Right ventricle myocardium superior (tissue), 1 donor: ENCODE measurements at regions of chr3 and their contacts with region 1.

Region 1: DNA sequence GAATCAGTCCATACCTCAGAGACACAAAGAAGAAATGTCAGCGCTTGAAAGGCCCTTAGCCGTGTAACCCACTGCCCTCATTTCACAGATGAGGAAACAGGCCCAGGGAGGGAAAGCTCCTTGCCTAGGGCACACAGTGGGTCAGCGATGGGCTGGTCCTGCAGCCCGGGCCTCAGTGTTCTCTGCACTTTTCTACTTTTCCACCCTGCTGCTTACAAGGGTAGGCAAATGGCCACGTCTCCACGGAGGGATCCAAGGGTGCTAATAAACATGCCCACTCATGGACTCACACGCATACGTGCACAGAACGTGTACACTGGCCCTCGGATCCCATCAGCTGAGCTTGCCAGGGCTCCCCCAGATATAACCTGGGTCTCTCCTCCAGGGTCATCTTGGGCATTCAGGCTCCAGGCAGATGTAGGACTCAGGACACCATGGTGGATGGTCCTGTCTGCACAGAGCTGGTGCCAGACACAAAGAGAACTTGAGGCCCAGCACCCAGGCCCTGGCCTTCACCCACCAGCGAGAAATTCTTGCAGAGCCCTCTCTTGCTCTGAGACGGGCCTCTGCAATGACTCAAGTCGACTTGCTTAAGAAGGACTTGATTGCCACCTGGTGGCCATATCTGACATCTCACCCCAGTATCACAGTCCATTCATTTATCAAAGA is 34.5 kb upstream of the VPS8 start:
- DNase-seq: peak; percentile 85
- ATAC-seq: peak; percentile 93

Region 2: DNA sequence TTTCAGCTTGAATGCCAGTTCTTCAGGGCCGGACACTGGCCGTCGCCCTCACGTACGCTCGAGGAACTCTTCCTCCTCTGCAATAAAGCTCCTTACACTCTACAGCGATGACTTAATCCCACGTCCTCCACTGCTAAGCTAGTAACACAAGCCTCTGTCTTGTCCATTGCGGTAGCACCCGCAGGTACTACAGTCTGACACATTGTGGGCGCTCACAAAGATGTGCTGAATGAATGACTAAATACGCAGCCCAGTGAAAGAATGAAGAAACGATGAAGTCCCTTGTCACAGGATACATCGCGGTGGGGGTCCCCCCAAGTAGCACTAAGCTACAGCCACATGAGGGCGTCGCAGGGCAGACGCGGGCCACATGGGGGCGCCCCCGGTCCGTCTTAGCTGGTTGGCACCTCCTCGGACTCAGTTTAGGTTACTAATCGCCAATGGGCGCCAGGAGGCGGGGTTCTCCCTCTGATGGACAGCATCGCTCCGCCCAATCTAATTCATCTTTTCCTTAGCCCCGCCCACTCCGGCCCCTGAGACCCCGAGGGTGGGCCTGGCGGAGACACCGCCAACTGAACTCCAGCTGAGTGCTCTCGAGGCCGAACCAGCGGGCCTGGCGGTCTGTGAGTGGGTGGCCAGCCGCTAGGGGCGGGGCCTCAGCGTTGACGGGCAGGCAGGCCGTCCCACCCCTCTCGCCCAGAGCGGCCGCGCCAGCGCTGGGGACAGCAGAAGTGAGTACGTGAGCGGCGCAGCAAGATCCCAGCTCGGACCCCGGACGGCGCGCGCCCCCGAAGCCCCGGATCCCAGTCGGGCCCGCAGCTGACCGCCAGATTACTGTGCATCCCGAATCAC is 216.2 kb before region 1 on chr3 and contains the start of gene EPHB3:
- intact Hi-C with region 1: loop called (anchors 1 kb)
- DNase-seq: peak; percentile 100
- ATAC-seq: peak; percentile 97
- total RNA-seq, gene EPHB3: 2.2 TPM

Region 3: DNA sequence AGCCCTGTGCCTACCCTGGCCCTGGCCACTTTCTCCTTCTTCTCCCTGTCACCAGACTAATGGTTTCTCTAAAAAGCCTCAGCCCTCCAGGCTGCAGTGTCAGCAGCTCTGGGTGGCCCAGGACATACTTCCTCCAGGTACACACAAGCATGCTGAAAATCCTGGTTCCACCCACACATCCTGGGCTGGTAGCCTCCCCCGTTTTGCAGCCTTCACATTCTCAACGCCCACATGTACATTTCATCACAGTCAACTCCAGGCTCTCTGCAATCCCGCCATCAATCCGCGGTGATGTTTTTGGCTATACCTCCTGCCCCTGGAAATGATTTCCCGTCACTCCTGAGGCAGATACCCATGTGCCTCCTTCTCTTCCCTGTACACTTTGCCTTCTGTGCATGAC is 125.0 kb before region 1 on chr3:
- intact Hi-C with region 1: no loop called
- DNase-seq: no peak
- ATAC-seq: peak; percentile 8

Region 4: DNA sequence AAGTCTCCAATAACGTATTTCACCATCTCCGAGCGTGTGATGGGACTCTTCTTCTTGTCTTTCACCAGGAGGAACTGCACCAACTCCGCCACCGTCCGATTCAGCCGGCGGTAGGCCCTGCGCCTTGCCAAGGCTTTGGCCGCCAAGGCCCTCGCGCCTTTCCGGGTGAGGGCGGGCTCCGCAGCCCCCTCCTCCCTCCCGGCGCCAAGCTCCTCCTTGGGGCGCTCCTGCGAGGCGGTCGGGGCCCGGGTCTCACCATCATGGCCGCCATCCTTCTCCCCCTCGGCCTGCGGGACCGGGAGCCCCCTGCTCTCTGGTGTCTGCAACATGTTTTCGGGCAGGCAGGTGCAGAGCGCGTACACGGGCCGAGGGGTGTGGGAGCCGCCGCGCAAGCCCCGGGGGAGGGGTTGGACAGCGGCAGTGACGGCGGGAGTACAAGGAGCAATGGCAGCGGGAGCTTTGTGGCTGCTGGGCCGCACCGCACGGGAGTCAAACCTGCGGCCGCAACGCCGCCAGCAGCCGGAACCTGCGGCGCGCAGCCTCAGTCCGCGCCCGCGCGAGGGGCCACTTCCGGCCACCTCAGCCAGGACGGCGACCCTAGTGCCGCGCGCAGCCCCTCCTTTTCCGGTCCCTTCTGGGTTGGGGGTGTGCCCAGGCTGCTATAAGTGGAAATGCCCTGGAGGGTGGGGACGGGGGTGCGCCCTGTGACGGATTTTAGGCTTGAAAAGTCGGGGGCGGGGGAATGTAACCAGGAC is 65.8 kb before region 1 on chr3 and contains the start of gene MAGEF1:
- intact Hi-C with region 1: loop called (anchors 5 kb)
- DNase-seq: peak; percentile 90
- ATAC-seq: peak; percentile 97
- total RNA-seq, gene MAGEF1: 28.5 TPM

Region 5: GRCh38 chr3:185059766-185060165 is 282.3 kb after region 1 on chr3:
- intact Hi-C with region 1: no loop called
- DNase-seq: no peak
- ATAC-seq: peak; percentile 53